Activated CD4-positive, alpha-beta memory T cell treated with anti-CD3 and anti-CD28 coated beads for 36 hours (primary cell): ENCODE measurements at regions of chr4 and their contacts with region 1.

Region 1: GRCh38 chr4:76148142-76148865 is at the start of gene NUP54:
- DNase-seq: peak; percentile 98
- H3K4me3 Mint-ChIP-seq: peak within 1 kb of the TSS; percentile 91
- H3K27ac Mint-ChIP-seq: peak within 1 kb of the TSS; percentile 88
- H3K4me1 Mint-ChIP-seq: peaks cover 25% of the 10 kb centered on the region
- H3K27me3 Mint-ChIP-seq: no peaks in the 10 kb centered on the region
- total RNA-seq, gene NUP54: 51.3 to 55.9 TPM

Region 2: DNA sequence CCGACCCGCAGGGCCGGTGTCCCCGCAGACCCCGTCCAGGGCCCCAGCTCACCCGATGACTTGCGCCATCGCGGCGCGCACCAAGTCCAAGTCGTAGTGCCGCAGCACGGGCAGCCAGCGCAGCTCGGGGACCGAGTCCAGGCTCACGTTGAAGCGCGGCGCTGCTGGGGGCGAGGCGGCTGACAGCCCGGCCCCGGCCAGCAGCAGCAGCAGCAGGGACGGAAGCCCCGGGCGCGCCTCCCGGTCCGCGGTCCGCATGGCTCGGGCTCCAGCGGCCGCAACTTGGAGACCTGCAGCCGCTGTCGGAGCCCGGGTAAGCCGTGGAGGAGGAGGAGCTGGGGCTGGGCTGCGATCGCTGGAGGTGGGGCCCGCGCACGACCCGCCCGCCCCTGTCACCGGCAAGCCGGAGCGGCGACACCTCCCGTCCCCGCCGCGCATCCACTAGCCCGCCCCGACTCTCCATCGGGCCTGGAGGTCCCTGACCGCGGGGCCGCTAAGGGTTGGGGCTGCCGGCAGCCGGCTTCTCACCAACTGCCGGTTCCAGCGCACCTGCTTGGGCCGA is 207.5 kb before region 1 on chr4 and contains the start of gene NAAA:
- CTCF ChIA-PET with region 1: interaction called, 3 read pairs
- POLR2A ChIA-PET with region 1: interaction called, 4 read pairs
- intact Hi-C with region 1: loop called (anchors 2 kb)
- DNase-seq: peak; percentile 91
- H3K4me3 Mint-ChIP-seq: peak within 1 kb of the TSS; percentile 96
- H3K27ac Mint-ChIP-seq: peak within 1 kb of the TSS; percentile 93
- H3K4me1 Mint-ChIP-seq: peaks cover 20% of the 10 kb centered on the region
- H3K27me3 Mint-ChIP-seq: no peaks in the 10 kb centered on the region
- total RNA-seq, gene NAAA: 31.7 to 32.2 TPM

Region 3: DNA sequence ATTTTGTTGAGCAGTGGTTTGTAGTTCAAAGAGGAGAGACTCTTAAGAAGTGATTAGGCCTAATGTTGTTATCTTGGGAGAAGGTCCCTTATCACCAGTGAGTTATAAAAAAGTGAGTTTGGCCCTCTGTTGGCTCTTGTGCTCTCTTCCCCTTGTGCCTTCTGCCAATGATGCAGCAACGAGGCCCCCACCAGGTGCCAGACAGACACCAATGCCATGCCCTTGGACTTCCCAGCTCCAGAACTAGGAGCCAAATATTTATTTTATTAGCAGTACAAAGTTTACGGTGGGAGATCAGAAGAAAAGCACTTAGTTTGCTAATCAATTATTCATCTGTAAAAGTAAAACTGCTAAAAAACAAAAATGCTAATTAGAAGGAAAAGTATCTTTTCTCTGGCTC is 184.7 kb before region 1 on chr4:
- CTCF ChIA-PET with region 1: no interaction called
- POLR2A ChIA-PET with region 1: no interaction called
- intact Hi-C with region 1: no loop called
- DNase-seq: no peak
- H3K4me3 Mint-ChIP-seq: no peak overlapping the region
- H3K27ac Mint-ChIP-seq: no peak overlapping the region
- H3K4me1 Mint-ChIP-seq: no peaks in the 10 kb centered on the region
- H3K27me3 Mint-ChIP-seq: no peaks in the 10 kb centered on the region

Region 4: DNA sequence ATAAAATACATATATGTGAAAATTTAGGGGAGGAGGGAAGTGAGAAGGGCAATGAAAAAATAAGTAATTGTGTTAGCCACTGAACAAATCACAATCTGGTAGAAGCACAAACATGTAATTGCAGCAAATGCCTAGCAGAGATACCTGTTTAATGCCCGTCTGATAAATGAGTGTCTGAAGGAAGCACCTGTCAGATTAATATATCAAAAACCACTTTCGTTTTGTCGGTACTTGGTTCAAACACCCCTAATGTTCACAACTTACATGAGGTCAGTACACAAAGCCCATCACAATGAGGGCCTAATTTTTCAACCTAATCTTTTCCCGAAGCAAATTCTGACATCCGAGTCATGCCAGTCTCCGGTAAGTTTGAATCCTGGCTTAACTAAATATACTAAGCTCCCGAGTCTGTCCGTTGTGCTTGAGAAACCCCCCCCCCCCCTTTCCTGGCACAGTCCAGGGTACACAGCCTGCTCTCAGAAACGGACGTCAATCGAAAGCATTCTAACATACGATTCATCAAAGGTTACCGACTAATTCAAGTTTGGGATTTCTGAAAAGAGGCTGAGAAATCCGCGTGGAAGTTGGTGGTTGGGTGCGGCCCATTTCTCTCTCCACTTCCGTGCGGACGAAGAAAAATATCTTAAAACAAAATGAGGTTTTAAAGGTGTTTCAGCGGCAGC is 158.3 kb before region 1 on chr4:
- CTCF ChIA-PET with region 1: interaction called, 3 read pairs
- POLR2A ChIA-PET with region 1: no interaction called
- intact Hi-C with region 1: loop called (anchors 1 kb)
- DNase-seq: no peak
- H3K4me3 Mint-ChIP-seq: peak overlapping the region; percentile 85
- H3K27ac Mint-ChIP-seq: peak overlapping the region; percentile 57
- H3K4me1 Mint-ChIP-seq: peaks cover 29% of the 10 kb centered on the region
- H3K27me3 Mint-ChIP-seq: peaks cover 3% of the 10 kb centered on the region

Region 5: GRCh38 chr4:76061982-76062381 is 86.3 kb before region 1 on chr4:
- CTCF ChIA-PET with region 1: no interaction called
- POLR2A ChIA-PET with region 1: interaction called, 3 read pairs
- intact Hi-C with region 1: loop called (anchors 5 kb)
- DNase-seq: no peak
- H3K4me3 Mint-ChIP-seq: no peak overlapping the region
- H3K27ac Mint-ChIP-seq: no peak overlapping the region
- H3K4me1 Mint-ChIP-seq: peaks cover 48% of the 10 kb centered on the region
- H3K27me3 Mint-ChIP-seq: peaks cover 18% of the 10 kb centered on the region

Region 6: GRCh38 chr4:76213415-76214176 is 65.3 kb after region 1 on chr4 and contains the start of gene SCARB2:
- CTCF ChIA-PET with region 1: no interaction called
- POLR2A ChIA-PET with region 1: no interaction called
- intact Hi-C with region 1: loop called (anchors 5 kb)
- DNase-seq: peak; percentile 75
- H3K4me3 Mint-ChIP-seq: peak within 1 kb of the TSS; percentile 70
- H3K27ac Mint-ChIP-seq: peak within 1 kb of the TSS; percentile 44
- H3K4me1 Mint-ChIP-seq: peaks cover 25% of the 10 kb centered on the region
- H3K27me3 Mint-ChIP-seq: no peaks in the 10 kb centered on the region
- total RNA-seq, gene SCARB2: 7.0 to 8.2 TPM